RWPE1 (cell line): ENCODE measurements at regions of chr17 and their contacts with region 1.

Region 1: GRCh38 chr17:1830294-1830708 is 496 bp downstream of the RPA1 start:
- DNase-seq: peak; percentile 15
- H3K27ac ChIP-seq: peak overlapping the region; percentile 84
- CTCF ChIP-seq: no peak

Region 2: GRCh38 chr17:1488030-1488863 is 342.1 kb before region 1 on chr17:
- CTCF ChIA-PET with region 1: no interaction called
- POLR2A ChIA-PET with region 1: no interaction called
- DNase-seq: peak; percentile 82
- H3K27ac ChIP-seq: peak overlapping the region; percentile 97
- CTCF ChIP-seq: no peak

Region 3: DNA sequence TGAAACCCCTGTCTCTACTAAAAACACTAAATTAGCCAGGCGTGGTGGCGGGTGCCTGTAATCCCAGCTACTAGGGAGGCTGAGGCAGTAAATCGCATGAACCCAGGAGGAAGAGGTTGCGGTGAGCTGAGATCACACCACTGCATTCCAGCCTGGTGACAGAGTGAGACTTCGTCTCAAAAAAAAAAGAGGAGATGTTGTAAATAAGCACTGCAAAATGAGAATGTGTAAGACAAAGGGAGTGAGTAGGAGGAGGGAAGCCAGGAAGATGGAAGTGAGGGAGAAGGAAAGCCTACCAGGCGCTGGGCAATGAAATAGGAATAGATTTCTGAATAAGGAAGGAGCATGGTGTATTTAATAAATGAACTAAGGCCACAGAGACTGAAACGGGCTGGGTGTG is 137.0 kb before region 1 on chr17:
- CTCF ChIA-PET with region 1: no interaction called
- POLR2A ChIA-PET with region 1: interaction called, 17 read pairs
- DNase-seq: no peak
- H3K27ac ChIP-seq: no peak overlapping the region
- CTCF ChIP-seq: no peak

Region 4: GRCh38 chr17:1736348-1737281 is 93.7 kb before region 1 on chr17:
- CTCF ChIA-PET with region 1: no interaction called
- POLR2A ChIA-PET with region 1: no interaction called
- DNase-seq: peak; percentile 40
- H3K27ac ChIP-seq: peak overlapping the region; percentile 99
- CTCF ChIP-seq: no peak

Region 5: GRCh38 chr17:1803280-1803679 is 27.0 kb before region 1 on chr17:
- CTCF ChIA-PET with region 1: no interaction called
- POLR2A ChIA-PET with region 1: no interaction called
- DNase-seq: no peak
- H3K27ac ChIP-seq: 0 out of 2 replicates have a peak overlapping the region, but pooled peaks have one; percentile 21
- CTCF ChIP-seq: no peak